ENCODE measurements at regions of chr14 and their contacts with region 1.

Region 1: DNA sequence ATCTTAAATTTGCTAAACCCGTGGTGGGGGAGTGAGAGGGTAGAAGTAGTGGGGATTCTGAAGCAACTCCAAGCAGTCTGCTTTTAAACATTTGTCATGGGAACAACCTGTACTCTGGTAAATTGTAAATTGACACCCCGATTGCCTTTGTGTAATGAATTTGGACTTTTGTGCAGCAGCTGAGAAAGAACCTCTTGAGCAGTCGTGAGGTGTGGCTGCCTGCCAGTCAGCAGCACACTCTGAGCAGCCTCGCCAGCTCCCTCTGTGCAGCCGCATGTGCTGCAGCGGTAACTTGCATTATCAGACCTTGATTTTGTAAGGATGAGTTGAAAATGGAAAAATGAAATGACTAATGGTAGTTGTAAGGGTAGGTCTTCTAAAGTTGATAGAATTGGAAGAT is 74.3 kb downstream of the SUSD6 start:
- DNase-seq: peak; percentile 80
- H3K4me3 Mint-ChIP-seq: peak overlapping the region; percentile 57
- H3K27ac Mint-ChIP-seq: peak overlapping the region; percentile 96
- H3K4me1 Mint-ChIP-seq: peaks cover 83% of the 10 kb centered on the region
- H3K27me3 Mint-ChIP-seq: no peaks in the 10 kb centered on the region

Region 2: DNA sequence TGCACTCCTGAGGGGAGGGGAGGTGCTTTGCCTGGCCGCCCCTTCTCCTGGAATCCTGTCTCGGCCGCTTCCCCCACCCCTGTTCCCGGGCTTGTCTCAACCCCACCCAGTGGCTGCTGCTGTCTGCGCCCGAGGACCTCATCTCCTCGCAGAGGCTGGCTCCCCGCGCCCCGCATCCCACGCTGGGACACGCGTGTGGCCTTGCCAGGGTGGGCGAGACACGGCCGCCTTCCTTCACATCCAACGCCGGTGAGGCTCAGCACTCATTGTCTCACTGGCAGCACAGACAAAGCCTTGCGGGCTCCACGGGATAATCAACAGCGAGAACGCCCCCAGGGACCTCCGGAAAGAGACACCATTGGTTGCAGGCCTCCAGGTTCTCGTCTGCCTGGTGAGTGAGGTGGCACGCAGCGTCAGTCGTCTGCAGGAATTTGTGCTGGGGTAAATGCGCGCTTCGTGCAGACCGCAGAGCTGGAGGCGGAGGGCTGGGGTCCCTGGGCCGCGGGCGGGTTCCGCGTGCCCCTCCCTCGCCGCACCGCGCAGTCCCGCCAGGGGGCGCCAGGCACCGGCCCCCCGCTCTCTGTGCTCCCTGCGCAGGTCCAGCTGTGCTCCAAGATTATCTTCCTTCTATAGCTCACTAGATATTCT is 137.9 kb before region 1 on chr14:
- CTCF ChIA-PET with region 1: no interaction called
- POLR2A ChIA-PET with region 1: no interaction called
- intact Hi-C with region 1: no loop called
- DNase-seq: peak; percentile 44
- H3K4me3 Mint-ChIP-seq: no peak overlapping the region
- H3K27ac Mint-ChIP-seq: no peak overlapping the region
- H3K4me1 Mint-ChIP-seq: peaks cover 11% of the 10 kb centered on the region
- H3K27me3 Mint-ChIP-seq: peaks cover 40% of the 10 kb centered on the region

Region 3: DNA sequence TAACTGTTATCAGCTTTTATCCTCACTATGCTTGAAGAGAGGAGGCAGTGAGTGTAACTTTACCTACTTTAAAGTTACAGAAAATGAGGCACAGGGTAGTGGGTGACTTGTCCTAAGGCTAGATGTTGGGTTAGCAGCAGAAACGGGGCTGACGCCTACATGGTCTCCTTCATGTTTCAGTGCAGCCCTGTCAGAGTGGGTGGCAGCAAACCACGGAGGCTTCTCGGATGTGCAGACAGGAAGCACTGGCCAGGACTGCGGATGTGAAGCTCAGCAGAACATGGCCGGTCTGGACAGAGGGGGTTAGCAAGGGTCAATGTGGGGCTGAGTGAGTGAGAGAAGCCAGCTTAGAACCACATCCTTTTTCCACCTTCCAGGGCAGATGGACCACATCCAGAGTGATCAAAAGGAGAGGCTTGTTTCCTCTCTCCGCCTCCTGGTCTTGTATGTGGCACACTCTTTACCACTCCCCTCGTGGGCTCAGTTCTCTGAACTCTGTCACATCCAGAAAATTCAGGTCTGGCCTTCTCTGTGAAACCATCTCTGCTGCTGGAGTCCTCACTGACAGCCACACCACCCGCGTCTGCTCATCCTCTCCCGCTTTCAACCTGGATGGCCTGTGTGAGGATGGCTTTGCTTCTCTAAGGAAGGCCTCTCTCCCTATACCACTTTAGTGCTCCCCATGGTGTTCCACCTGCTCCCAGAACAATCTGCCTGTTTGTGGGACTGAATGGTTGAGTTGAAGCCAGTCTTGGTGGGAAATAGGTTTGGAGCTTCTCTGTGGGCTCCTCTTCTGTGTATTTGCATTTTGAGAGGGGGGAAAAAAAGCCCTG is 60.2 kb before region 1 on chr14:
- CTCF ChIA-PET with region 1: no interaction called
- POLR2A ChIA-PET with region 1: interaction called, 4 read pairs
- intact Hi-C with region 1: loop called (anchors 2 kb)
- DNase-seq: peak; percentile 92
- H3K4me3 Mint-ChIP-seq: peak overlapping the region; percentile 71
- H3K27ac Mint-ChIP-seq: peak overlapping the region; percentile 96
- H3K4me1 Mint-ChIP-seq: peaks cover 96% of the 10 kb centered on the region
- H3K27me3 Mint-ChIP-seq: no peaks in the 10 kb centered on the region

Region 4: GRCh38 chr14:69715725-69716477 is 30.2 kb after region 1 on chr14:
- CTCF ChIA-PET with region 1: no interaction called
- POLR2A ChIA-PET with region 1: interaction called, 6 read pairs
- intact Hi-C with region 1: loop called (anchors 1 kb)
- DNase-seq: no peak
- H3K4me3 Mint-ChIP-seq: no peak overlapping the region
- H3K27ac Mint-ChIP-seq: peak overlapping the region; percentile 87
- H3K4me1 Mint-ChIP-seq: peaks cover 47% of the 10 kb centered on the region
- H3K27me3 Mint-ChIP-seq: no peaks in the 10 kb centered on the region

Measured in activated CD4-positive, alpha-beta memory T cell treated with anti-CD3 and anti-CD28 coated beads for 36 hours (primary cell).